HCT116 (cell line): ENCODE measurements at regions of chr9 and their contacts with region 1.

Region 1: GRCh38 chr9:78121488-78121887 is 89.9 kb upstream of the GNAQ start:
- DNase-seq: peak; percentile 35
- ATAC-seq: peak; percentile 62; the same call in 1 of the 2 replicates
- H3K4me3 ChIP-seq: no peak overlapping the region
- H3K27ac ChIP-seq: no peak overlapping the region
- H3K4me1 ChIP-seq: no peaks in the 10 kb centered on the region
- H3K27me3 ChIP-seq: no peaks in the 10 kb centered on the region
- CTCF ChIP-seq: peak; percentile 61 to 80 (median 77)
- POLR2A ChIP-seq: no peak
- RAD21 ChIP-seq: peak; percentile 81

Region 2: GRCh38 chr9:77663754-77664153 is 457.7 kb before region 1 on chr9:
- CTCF ChIA-PET with region 1: no interaction called
- POLR2A ChIA-PET with region 1: interaction called, 3 read pairs
- RAD21 ChIA-PET with region 1: no interaction called
- intact Hi-C with region 1: loop called (anchors 10 kb)
- DNase-seq: no peak
- ATAC-seq: no peak
- H3K4me3 ChIP-seq: no peak overlapping the region
- H3K27ac ChIP-seq: no peak overlapping the region
- H3K4me1 ChIP-seq: no peaks in the 10 kb centered on the region
- H3K27me3 ChIP-seq: 0 out of 2 replicates have a peak, but pooled peaks cover 5% of the 10 kb centered on the region
- CTCF ChIP-seq: no peak
- POLR2A ChIP-seq: no peak
- RAD21 ChIP-seq: no peak

Region 3: DNA sequence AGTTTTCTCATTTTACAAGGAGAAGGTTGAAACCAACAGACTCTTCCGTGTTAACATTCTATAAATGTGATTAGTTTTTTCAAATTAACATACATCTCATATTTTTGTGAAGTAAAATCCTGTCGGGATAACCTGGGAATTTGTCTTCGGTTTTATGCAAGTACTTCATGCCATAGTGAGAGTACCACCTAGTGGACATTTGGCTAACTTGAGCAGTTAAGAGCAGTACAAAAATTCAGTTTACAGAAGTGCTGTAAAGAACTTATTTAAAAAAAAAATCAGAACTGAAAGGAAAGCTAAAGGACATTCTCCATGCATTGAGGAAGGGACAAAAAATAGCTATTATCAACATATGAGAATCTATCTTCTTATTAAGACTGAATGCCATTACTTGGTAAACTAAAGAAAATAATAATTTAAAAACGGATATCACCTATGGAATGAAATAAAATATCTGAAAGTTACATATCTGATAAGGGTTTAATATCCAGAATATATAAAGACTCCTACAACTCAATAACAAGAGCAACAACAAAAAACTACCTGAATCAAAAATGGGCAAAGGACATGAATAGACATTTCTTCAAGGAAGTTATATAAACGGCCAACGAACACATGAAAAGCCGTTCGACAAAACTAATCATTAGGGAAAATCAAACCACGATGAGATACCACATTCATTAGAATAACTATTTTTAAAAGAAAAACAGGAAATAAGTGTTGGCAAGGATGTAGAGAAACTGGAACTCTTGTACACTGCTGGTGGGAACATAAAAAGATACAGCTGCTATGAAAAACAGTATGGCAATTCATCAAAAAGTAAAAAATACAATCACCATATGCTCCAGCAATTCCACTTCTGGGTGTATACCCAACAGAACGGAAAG is 356.4 kb before region 1 on chr9:
- CTCF ChIA-PET with region 1: no interaction called
- POLR2A ChIA-PET with region 1: no interaction called
- RAD21 ChIA-PET with region 1: no interaction called
- intact Hi-C with region 1: loop called (anchors 5 kb)
- DNase-seq: peak; percentile 32
- ATAC-seq: peak; percentile 61
- H3K4me3 ChIP-seq: no peak overlapping the region
- H3K27ac ChIP-seq: no peak overlapping the region
- H3K4me1 ChIP-seq: no peaks in the 10 kb centered on the region
- H3K27me3 ChIP-seq: no peaks in the 10 kb centered on the region
- CTCF ChIP-seq: peak in 2 of 3 experiments; percentile 69 to 70; a peak in 4 of 6 replicates
- POLR2A ChIP-seq: no peak
- RAD21 ChIP-seq: peak; percentile 33; the same call in 1 of the 2 replicates

Region 4: DNA sequence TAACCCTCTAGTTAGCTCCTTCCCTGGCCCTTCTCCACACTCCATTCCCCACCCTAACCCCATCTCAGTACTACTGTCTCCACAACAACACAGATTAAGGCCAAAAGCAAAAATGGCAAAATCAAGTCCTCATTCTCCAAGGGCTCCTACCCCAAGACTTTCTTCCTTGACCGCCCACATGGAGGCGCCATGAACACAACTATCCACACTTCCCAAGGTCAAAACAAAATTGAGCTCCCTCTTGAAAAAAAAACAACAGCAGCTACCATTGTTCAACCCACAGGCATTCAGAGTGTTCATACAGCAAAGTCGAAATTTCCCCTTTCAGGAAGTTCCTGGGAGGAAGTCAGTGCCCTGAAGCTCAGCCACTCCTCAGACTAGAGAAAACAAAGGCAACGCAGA is 144.3 kb before region 1 on chr9:
- CTCF ChIA-PET with region 1: interaction called, 17 read pairs
- POLR2A ChIA-PET with region 1: no interaction called
- RAD21 ChIA-PET with region 1: no interaction called
- intact Hi-C with region 1: loop called (anchors 1 kb)
- DNase-seq: peak; percentile 21
- ATAC-seq: peak; percentile 77
- H3K4me3 ChIP-seq: no peak overlapping the region
- H3K27ac ChIP-seq: no peak overlapping the region
- H3K4me1 ChIP-seq: peaks cover 6 to 8% of the 10 kb centered on the region in 2 experiments
- H3K27me3 ChIP-seq: no peaks in the 10 kb centered on the region
- CTCF ChIP-seq: peak; percentile 50 to 61 (median 60); a peak in 5 of 6 replicates
- POLR2A ChIP-seq: no peak
- RAD21 ChIP-seq: peak; percentile 61